MCF 10A (cell line): ENCODE measurements at regions of chr1 and their contacts with region 1.

Region 1: GRCh38 chr1:234610348-234611152 is 572 bp upstream of the IRF2BP2 start:
- DNase-seq: peak; percentile 96
- H3K4me3 Mint-ChIP-seq: peak overlapping the region; percentile 95
- H3K27ac Mint-ChIP-seq: peak overlapping the region; percentile 95
- H3K4me1 Mint-ChIP-seq: peaks cover 51% of the 10 kb centered on the region
- H3K27me3 Mint-ChIP-seq: no peaks in the 10 kb centered on the region
- CTCF ChIP-seq: no peak

Region 2: DNA sequence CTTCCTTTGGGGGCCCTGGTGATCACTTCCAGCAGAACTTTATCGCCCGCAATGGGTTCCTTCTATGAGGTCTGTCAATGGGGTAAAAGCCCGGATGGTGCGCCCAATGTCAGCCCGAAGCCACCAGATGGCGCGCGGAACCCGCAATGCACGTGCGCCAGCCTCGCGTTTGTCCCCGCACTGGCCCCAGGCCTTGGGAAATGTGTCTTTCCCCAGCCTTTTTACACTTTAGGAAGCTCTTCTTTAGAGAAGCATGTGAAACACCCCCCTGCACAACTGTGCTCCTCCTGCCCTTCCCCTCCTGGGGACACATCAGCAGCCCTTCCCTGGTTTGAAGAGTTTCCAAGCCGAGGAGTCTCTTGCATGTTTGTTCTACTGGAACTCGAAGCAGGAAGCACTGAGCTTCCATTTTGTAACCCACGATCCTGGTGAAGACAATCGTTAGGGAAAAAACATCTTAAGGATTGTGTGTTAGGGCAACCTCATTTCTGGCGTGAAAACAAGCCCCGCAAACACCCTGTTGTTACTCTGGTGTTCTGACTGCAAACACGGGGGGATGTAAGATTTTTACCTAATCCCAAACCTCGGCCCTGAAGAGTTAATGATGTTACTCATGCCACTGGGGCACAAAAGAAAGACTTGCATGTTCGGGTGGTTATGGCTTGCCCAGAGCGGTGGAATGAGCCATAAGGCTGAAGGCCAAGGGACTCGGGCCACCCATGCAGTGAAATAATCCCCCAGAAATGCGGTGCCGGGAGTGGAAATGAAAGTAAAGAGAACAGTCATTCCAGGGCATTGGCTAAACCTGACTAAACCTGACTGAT is 111.2 kb before region 1 on chr1:
- CTCF ChIA-PET with region 1: interaction called, 42 read pairs
- POLR2A ChIA-PET with region 1: interaction called, 904 read pairs
- intact Hi-C with region 1: loop called (anchors 1 kb)
- DNase-seq: peak; percentile 97
- H3K4me3 Mint-ChIP-seq: peak overlapping the region; percentile 28
- H3K27ac Mint-ChIP-seq: peak overlapping the region; percentile 71
- H3K4me1 Mint-ChIP-seq: peaks cover 53% of the 10 kb centered on the region
- H3K27me3 Mint-ChIP-seq: no peaks in the 10 kb centered on the region
- CTCF ChIP-seq: peak; percentile 100

Region 3: DNA sequence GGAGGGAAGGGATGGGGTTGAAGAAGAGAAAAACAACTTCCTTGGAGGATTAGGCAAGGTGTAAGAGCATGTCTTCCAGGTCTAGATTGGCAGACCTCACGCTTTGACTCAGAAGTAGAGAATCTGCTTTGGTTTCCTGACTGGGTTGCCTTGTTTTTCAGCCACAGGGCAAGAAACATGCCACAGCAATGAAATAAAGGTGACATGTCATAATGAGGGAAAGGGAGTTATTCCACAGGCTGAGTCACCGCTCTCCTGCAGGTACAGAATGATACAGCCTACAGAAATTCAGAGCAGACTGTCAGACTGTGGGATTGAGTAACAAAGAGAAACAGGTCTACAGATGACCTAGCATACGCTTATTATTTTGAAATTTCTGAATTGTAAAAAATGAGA is 45.9 kb before region 1 on chr1:
- CTCF ChIA-PET with region 1: interaction called, 3 read pairs
- POLR2A ChIA-PET with region 1: interaction called, 137 read pairs
- intact Hi-C with region 1: loop called (anchors 2 kb)
- DNase-seq: peak; percentile 100
- H3K4me3 Mint-ChIP-seq: no peak overlapping the region
- H3K27ac Mint-ChIP-seq: peak overlapping the region; percentile 80
- H3K4me1 Mint-ChIP-seq: peaks cover 25% of the 10 kb centered on the region
- H3K27me3 Mint-ChIP-seq: no peaks in the 10 kb centered on the region
- CTCF ChIP-seq: no peak

Region 4: GRCh38 chr1:234670967-234671626 is 60.5 kb after region 1 on chr1:
- CTCF ChIA-PET with region 1: interaction called, 3 read pairs
- POLR2A ChIA-PET with region 1: interaction called, 24 read pairs
- intact Hi-C with region 1: no loop called
- DNase-seq: peak; percentile 37
- H3K4me3 Mint-ChIP-seq: no peak overlapping the region
- H3K27ac Mint-ChIP-seq: no peak overlapping the region
- H3K4me1 Mint-ChIP-seq: no peaks in the 10 kb centered on the region
- H3K27me3 Mint-ChIP-seq: no peaks in the 10 kb centered on the region
- CTCF ChIP-seq: no peak

Region 5: GRCh38 chr1:234862944-234863515 is 252.5 kb after region 1 on chr1:
- CTCF ChIA-PET with region 1: interaction called, 5 read pairs
- POLR2A ChIA-PET with region 1: no interaction called
- intact Hi-C with region 1: loop called (anchors 1 kb)
- DNase-seq: peak; percentile 40
- H3K4me3 Mint-ChIP-seq: no peak overlapping the region
- H3K27ac Mint-ChIP-seq: no peak overlapping the region
- H3K4me1 Mint-ChIP-seq: peaks cover 42% of the 10 kb centered on the region
- H3K27me3 Mint-ChIP-seq: no peaks in the 10 kb centered on the region
- CTCF ChIP-seq: no peak

Region 6: DNA sequence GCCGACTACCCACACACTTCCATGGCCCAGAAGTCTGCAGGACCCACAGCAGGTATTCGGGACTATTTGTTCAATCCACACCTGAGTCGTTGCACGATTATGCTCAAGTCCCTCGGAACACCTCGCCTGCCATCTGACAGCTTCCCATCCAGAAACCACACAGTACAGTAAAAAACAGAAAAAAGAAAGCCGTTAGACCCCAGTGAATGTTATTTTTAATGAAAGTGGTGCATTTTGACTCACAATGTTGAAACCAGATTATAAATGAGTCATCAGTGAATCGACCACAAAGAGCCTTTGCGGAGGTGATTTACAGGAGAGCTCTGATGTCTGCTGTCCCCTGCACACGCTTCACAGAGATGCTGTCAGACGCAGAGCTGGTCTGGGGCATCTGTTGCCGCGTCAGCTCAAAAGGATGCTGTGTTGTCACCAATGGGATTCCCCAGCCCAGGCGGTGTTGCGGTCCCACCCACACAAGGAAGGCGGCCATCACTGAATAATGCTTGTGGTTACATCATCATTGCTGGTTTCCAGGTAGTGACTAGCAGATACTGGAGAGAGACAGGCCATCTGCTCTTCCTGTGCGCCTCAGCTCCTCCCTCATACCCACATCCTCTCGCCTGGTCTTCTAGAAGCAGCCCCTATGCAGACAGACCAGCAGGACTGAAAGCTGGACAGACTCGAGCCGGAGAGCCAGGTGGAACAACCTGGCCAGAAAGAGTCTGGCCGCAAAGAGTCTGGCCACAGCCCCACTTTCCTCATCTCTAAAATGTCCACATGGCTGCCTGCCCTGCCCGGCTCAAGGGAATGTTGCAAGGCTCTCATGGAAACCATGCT is 401.3 kb after region 1 on chr1:
- CTCF ChIA-PET with region 1: interaction called, 4 read pairs
- POLR2A ChIA-PET with region 1: interaction called, 21 read pairs
- intact Hi-C with region 1: no loop called
- DNase-seq: peak; percentile 99
- H3K4me3 Mint-ChIP-seq: peak overlapping the region; percentile 47
- H3K27ac Mint-ChIP-seq: peak overlapping the region; percentile 92
- H3K4me1 Mint-ChIP-seq: peaks cover 14% of the 10 kb centered on the region
- H3K27me3 Mint-ChIP-seq: no peaks in the 10 kb centered on the region
- CTCF ChIP-seq: no peak

Region 7: DNA sequence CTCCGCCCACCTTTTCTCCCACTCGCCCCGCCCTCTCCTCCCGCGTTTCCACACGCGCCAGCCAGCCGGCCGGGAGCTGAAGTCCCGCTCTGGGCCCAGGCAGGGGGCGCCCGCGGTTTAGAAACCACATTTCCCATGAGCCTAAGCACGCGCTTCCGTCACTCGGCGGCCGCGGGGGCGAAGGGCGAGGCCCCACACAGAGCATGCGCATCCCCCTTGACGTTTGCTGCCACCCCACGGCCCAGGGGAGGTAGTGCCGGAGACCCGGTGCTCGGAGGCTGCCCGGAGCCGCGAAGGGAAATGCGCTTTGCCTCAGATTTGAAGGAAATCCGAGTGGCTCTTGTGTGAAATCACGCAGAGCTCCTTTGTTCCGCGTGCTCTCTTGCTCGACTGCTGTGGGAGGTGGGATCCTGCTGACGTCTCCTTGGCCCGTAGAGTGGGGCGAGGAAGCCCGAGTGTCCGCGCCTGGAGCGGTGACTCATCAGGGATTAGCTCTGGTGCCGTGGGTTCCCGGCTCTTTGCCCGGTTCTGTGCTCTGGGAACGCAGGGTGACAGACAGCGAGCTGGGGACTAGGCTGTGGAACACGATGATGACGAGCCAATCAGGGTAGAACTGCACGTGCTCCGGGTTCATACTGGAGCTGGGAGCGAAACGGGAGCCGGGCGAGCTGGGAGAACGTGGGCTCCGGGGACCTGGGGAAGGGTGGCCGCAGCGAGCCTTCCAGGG is 894.1 kb after region 1 on chr1:
- CTCF ChIA-PET with region 1: no interaction called
- POLR2A ChIA-PET with region 1: interaction called, 3 read pairs
- intact Hi-C with region 1: loop called (anchors 10 kb)
- DNase-seq: peak; percentile 100
- H3K4me3 Mint-ChIP-seq: peak overlapping the region; percentile 97
- H3K27ac Mint-ChIP-seq: peak overlapping the region; percentile 98
- H3K4me1 Mint-ChIP-seq: peaks cover 31% of the 10 kb centered on the region
- H3K27me3 Mint-ChIP-seq: no peaks in the 10 kb centered on the region
- CTCF ChIP-seq: peak; percentile 99